Activated CD4-positive, alpha-beta T cell treated with anti-CD3 and anti-CD28 coated beads for 36 hours (primary cell): ENCODE measurements at regions of chr1 and their contacts with region 1.

Region 1: DNA sequence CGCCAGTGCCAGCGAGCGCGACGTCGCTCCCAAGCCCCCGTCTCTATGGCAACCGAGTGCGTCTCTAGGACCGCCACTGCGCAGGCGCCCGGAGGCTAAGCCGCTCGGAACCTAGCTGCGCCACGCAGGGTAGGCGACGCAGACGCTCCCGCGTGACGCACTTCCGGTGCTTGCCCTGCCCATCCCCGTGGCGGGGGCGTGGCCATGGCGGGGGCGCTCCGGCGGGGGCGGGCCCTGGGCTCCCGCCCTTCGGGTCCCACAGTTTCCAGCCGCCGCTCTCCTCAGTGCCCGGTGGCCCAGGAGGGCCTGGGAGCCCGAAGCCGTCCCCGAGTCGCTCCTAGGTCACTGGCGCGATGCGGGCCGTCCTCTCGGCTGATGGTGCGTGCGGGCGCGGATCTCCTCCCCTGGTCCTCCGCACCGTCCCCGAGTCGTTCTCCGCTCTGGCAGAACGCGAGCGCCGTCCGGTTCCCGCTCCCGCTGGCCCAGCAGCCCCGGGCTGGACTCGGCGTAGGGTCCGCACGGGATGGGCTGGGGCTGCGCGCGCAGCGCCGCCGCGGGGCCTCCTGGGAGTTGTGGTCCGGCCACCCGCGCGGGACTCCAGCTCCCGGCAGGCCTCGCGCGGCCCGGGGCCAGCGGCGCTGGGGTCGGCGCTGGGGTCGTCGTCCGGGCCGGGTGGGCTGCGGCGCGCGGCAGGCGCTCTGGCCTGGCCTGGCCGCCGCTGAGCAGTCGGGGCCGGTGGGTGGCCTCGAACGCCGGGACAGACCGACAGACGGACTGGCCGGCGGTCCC is at the start of gene MIB2:
- DNase-seq: peak; percentile 98
- ATAC-seq: peak; percentile 84
- H3K4me3 Mint-ChIP-seq: peak within 1 kb of the TSS; percentile 96
- H3K27ac Mint-ChIP-seq: peak within 1 kb of the TSS; percentile 95
- H3K4me1 Mint-ChIP-seq: peaks cover 24% of the 10 kb centered on the region
- H3K27me3 Mint-ChIP-seq: no peaks in the 10 kb centered on the region
- total RNA-seq, gene MIB2: 37.1 TPM

Region 2: DNA sequence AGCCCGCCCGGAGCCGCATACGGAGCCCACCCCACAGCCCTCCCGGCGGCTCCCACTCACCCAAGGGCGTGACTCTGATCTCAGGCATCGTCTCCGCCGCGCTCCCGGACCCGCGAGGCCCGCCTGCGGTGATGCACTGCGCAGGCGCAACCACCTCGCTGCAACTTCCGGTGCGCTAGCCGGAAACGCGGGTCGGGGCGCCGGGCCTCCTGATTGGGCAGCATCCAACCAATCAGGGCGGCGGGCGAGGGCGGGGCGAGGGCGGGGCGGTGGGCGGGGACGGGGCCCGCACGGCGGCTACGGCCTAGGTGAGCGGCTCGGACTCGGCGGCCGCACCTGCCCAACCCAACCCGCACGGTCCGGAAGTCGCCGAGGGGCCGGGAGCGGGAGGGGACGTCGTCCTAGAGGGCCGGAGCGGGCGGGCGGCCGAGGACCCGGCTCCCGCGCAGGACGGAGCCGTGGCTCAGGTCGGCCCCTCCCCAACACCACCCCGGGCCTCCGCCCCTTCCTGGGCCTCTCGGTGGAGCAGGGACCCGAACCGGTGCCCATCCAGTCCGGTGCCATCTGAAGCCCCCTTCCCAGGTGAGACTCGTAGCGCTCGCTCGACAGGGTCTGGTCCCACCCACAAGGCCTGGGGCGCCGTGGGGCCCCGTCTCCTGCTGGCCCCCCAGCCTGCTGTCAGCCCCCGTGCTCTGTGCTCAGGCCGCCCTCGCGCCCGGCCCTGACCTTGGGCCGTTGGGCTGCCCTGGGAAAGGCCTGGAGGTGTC is 290.7 kb before region 1 on chr1 and contains the starts of genes CPTP and INTS11:
- CTCF ChIA-PET with region 1: no interaction called
- POLR2A ChIA-PET with region 1: interaction called, 4 read pairs
- intact Hi-C with region 1: loop called in 1 of 2 experiments (anchors 1 kb)
- DNase-seq: peak; percentile 98
- ATAC-seq: peak; percentile 90
- H3K4me3 Mint-ChIP-seq: peak within 1 kb of the TSS; percentile 80
- H3K27ac Mint-ChIP-seq: peak within 1 kb of the TSS; percentile 83
- H3K4me1 Mint-ChIP-seq: peaks cover 31% of the 10 kb centered on the region
- H3K27me3 Mint-ChIP-seq: no peaks in the 10 kb centered on the region
- total RNA-seq, gene CPTP: 9.9 to 11.4 TPM
- total RNA-seq, gene INTS11: 117 to 151 TPM

Region 3: DNA sequence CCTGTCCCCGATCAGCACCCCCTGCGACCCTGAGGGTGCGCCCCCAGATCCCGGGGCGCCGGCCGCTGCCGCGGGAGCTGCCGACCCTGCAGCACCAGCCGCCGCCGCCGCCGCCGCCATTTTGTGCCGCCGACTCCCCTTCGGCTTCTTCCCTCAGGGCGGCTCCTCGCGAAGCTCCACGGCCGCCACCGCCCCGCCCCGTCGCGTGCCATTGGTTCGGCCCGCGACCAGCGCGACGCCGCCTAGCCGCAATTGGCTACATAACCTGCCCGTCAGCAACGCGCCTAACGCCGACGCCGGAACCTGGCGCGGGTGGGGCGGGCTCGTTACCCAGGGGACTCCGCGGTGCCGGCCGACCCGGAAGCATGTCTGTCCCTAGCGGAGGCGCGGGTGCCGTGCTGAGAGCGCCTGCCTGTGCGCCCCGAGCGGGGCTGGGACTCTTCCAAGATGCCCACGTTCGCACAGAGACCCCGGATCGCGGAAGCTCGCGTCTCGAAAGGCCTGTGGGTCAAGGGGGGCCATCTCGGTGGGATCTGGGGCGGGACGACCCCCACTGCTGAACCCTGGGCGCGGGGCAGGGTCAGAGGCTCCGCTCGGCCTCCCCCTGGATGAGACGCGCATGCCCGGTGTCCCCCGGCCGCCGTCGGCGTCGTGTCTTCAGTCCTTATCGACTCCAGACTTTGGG is 216.1 kb before region 1 on chr1 and contains the start of gene CCNL2:
- CTCF ChIA-PET with region 1: no interaction called
- POLR2A ChIA-PET with region 1: no interaction called
- intact Hi-C with region 1: loop called in 1 of 2 experiments (anchors 1 kb)
- DNase-seq: peak; percentile 100
- ATAC-seq: peak; percentile 97
- H3K4me3 Mint-ChIP-seq: peak within 1 kb of the TSS; percentile 93
- H3K27ac Mint-ChIP-seq: peak within 1 kb of the TSS; percentile 91
- H3K4me1 Mint-ChIP-seq: peaks cover 52% of the 10 kb centered on the region
- H3K27me3 Mint-ChIP-seq: no peaks in the 10 kb centered on the region
- total RNA-seq, gene CCNL2: 73.6 to 89.7 TPM

Region 4: GRCh38 chr1:1511533-1512285 is 103.7 kb before region 1 on chr1 and contains the start of gene ATAD3A:
- CTCF ChIA-PET with region 1: no interaction called
- POLR2A ChIA-PET with region 1: no interaction called
- intact Hi-C with region 1: loop called in 1 of 2 experiments (anchors 1 kb)
- DNase-seq: peak; percentile 99
- ATAC-seq: peak; percentile 97
- H3K4me3 Mint-ChIP-seq: peak within 1 kb of the TSS; percentile 93
- H3K27ac Mint-ChIP-seq: peak within 1 kb of the TSS; percentile 97
- H3K4me1 Mint-ChIP-seq: peaks cover 7% of the 10 kb centered on the region
- H3K27me3 Mint-ChIP-seq: no peaks in the 10 kb centered on the region
- total RNA-seq, gene ATAD3A: 39.9 to 42.9 TPM

Region 5: GRCh38 chr1:1630271-1630964 is 15.0 kb after region 1 on chr1:
- CTCF ChIA-PET with region 1: interaction called, 5 read pairs
- POLR2A ChIA-PET with region 1: interaction called, 17 read pairs
- intact Hi-C with region 1: loop called (anchors 1 to 2 kb)
- DNase-seq: peak; percentile 96
- ATAC-seq: peak; percentile 81
- H3K4me3 Mint-ChIP-seq: peak overlapping the region; percentile 66
- H3K27ac Mint-ChIP-seq: peak overlapping the region; percentile 86
- H3K4me1 Mint-ChIP-seq: peaks cover 7% of the 10 kb centered on the region
- H3K27me3 Mint-ChIP-seq: peaks cover 4% of the 10 kb centered on the region

Region 6: GRCh38 chr1:1665800-1666251 is 50.4 kb after region 1 on chr1:
- CTCF ChIA-PET with region 1: no interaction called
- POLR2A ChIA-PET with region 1: no interaction called
- intact Hi-C with region 1: no loop called
- DNase-seq: peak; percentile 64
- ATAC-seq: peak; percentile 57
- H3K4me3 Mint-ChIP-seq: no peak overlapping the region
- H3K27ac Mint-ChIP-seq: no peak overlapping the region
- H3K4me1 Mint-ChIP-seq: peaks cover 2% of the 10 kb centered on the region
- H3K27me3 Mint-ChIP-seq: no peaks in the 10 kb centered on the region

Region 7: GRCh38 chr1:2391041-2391930 is 775.8 kb after region 1 on chr1 and contains the starts of genes MORN1 and RER1:
- CTCF ChIA-PET with region 1: no interaction called
- POLR2A ChIA-PET with region 1: no interaction called
- intact Hi-C with region 1: loop called in 1 of 2 experiments (anchors 1 kb)
- DNase-seq: peak; percentile 100
- ATAC-seq: peak; percentile 99
- H3K4me3 Mint-ChIP-seq: peak within 1 kb of the TSS; percentile 89
- H3K27ac Mint-ChIP-seq: peak within 1 kb of the TSS; percentile 76
- H3K4me1 Mint-ChIP-seq: peaks cover 38% of the 10 kb centered on the region
- H3K27me3 Mint-ChIP-seq: no peaks in the 10 kb centered on the region
- total RNA-seq, gene MORN1: 5.1 to 6.1 TPM
- total RNA-seq, gene RER1: 146 to 152 TPM